Esophagus muscularis mucosa (tissue), 4 donors: ENCODE measurements at regions of chr16 and their contacts with region 1.

Region 1: GRCh38 chr16:67806428-67807147 is at the starts of genes RANBP10 and TSNAXIP1:
- DNase-seq: peak; percentile 99
- H3K4me3 ChIP-seq: peak within 1 kb of the TSS; percentile 70 to 100 (median 94)
- H3K27ac ChIP-seq: peak within 1 kb of the TSS; percentile 84 to 92 (median 89)
- H3K4me1 ChIP-seq: peaks cover 20 to 45% (median 27%) of the 10 kb centered on the region in 4 donors
- H3K27me3 ChIP-seq: no peaks in the 10 kb centered on the region
- CTCF ChIP-seq: no peak
- EP300 ChIP-seq: no peak
- POLR2A ChIP-seq: peak; percentile 74
- total RNA-seq, gene RANBP10: 5.8 to 12.2 (median 8.6) TPM
- total RNA-seq, gene TSNAXIP1: 0.83 to 2.2 (median 1.1) TPM

Region 2: DNA sequence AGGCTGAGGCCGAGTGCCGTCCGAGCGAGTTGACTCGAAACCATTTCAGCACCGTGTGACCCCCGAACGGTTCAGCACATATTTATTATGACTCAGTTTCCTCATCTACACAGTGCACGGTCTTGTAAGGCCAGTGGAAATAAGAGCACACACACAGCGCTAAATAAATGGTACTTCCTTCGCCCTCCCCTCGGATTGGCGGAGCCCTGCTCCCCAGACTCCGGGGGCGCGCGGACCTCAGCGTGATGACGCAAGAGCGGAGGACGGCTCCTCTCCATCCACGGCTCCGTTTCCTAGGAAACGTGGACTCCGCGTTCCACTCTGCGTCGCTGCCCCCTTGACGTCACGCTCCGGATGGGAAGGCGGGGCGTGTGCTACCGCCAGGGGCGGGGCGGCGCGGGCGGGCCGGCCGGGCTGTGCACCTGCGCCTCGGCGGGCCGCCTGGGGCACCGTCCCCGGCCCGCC is 146.0 kb before region 1 on chr16 and contains the start of gene PARD6A:
- intact Hi-C with region 1: loop called (anchors 5 kb)
- DNase-seq: peak; percentile 98
- H3K4me3 ChIP-seq: peak within 1 kb of the TSS; percentile 74 to 96 (median 85)
- H3K27ac ChIP-seq: peak within 1 kb of the TSS; percentile 95 to 99 (median 98)
- H3K4me1 ChIP-seq: peaks cover 19 to 43% (median 34%) of the 10 kb centered on the region in 4 donors
- H3K27me3 ChIP-seq: no peaks in the 10 kb centered on the region
- CTCF ChIP-seq: peak in 1 of 3 experiments; percentile 17
- EP300 ChIP-seq: peak; percentile 7
- POLR2A ChIP-seq: no peak
- total RNA-seq, gene PARD6A: 11.3 to 22.8 (median 16.0) TPM